T-cell (primary cell): ENCODE measurements at regions of chr3 and their contacts with region 1.

Region 1: GRCh38 chr3:133328373-133328772 is 71.5 kb upstream of the BFSP2 start:
- DNase-seq: no peak
- ATAC-seq: no peak
- H3K4me3 ChIP-seq: no peak overlapping the region
- H3K4me3 Mint-ChIP-seq: no peak overlapping the region
- H3K27ac ChIP-seq: no peak overlapping the region
- H3K27ac Mint-ChIP-seq: no peak overlapping the region
- H3K4me1 ChIP-seq: no peaks in the 10 kb centered on the region
- H3K4me1 Mint-ChIP-seq: no peaks in the 10 kb centered on the region
- H3K27me3 ChIP-seq: no peaks in the 10 kb centered on the region
- H3K27me3 Mint-ChIP-seq: peaks cover 0 to 5% of the 10 kb centered on the region in 2 donors

Region 2: GRCh38 chr3:133376810-133377209 is 48.4 kb after region 1 on chr3:
- CTCF ChIA-PET with region 1: no interaction called
- POLR2A ChIA-PET with region 1: no interaction called
- DNase-seq: no peak
- ATAC-seq: no peak
- H3K4me3 ChIP-seq: no peak overlapping the region
- H3K4me3 Mint-ChIP-seq: no peak overlapping the region
- H3K27ac ChIP-seq: no peak overlapping the region
- H3K27ac Mint-ChIP-seq: no peak overlapping the region
- H3K4me1 ChIP-seq: no peaks in the 10 kb centered on the region
- H3K4me1 Mint-ChIP-seq: no peaks in the 10 kb centered on the region
- H3K27me3 ChIP-seq: no peaks in the 10 kb centered on the region
- H3K27me3 Mint-ChIP-seq: no peaks in the 10 kb centered on the region

Region 3: DNA sequence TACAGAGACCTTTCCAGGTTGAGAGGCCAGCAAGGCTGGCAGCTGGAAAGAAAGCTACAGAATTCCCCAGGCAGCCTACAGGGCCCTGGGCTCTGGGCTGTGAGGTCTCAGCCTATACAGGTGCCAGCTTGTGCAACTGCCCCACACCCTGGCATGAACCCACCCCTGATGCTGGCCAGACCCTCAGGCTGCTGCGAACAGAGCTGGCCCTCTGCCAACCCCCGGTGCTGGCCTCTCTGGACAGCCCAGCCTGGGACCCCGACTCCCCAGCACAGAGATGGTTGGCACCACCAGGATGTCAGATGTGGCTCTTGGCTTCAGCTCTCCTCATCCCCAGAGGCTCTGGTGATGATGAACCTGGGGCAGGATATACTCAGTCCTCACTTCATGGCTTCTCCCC is 60.3 kb after region 1 on chr3:
- CTCF ChIA-PET with region 1: interaction called in 1 of 2 experiments, 12 read pairs
- POLR2A ChIA-PET with region 1: no interaction called
- DNase-seq: no peak
- ATAC-seq: no peak
- H3K4me3 ChIP-seq: no peak overlapping the region
- H3K4me3 Mint-ChIP-seq: no peak overlapping the region
- H3K27ac ChIP-seq: no peak overlapping the region
- H3K27ac Mint-ChIP-seq: no peak overlapping the region
- H3K4me1 ChIP-seq: no peaks in the 10 kb centered on the region
- H3K4me1 Mint-ChIP-seq: peaks cover 0 to 5% (median 0%) of the 10 kb centered on the region in 3 donors
- H3K27me3 ChIP-seq: peaks cover 0 to 7% of the 10 kb centered on the region in 2 experiments
- H3K27me3 Mint-ChIP-seq: peaks cover 0 to 2% of the 10 kb centered on the region in 2 donors

Region 4: GRCh38 chr3:134677196-134677986 is 1349.0 kb after region 1 on chr3:
- CTCF ChIA-PET with region 1: no interaction called
- POLR2A ChIA-PET with region 1: no interaction called
- DNase-seq: no peak
- ATAC-seq: no peak
- H3K4me3 ChIP-seq: no peak overlapping the region
- H3K4me3 Mint-ChIP-seq: no peak overlapping the region
- H3K27ac ChIP-seq: no peak overlapping the region
- H3K27ac Mint-ChIP-seq: no peak overlapping the region
- H3K4me1 ChIP-seq: no peaks in the 10 kb centered on the region
- H3K4me1 Mint-ChIP-seq: no peaks in the 10 kb centered on the region
- H3K27me3 ChIP-seq: peaks cover 0 to 13% of the 10 kb centered on the region in 2 experiments
- H3K27me3 Mint-ChIP-seq: peaks cover 7 to 14% of the 10 kb centered on the region in 2 donors